Activated T-helper 1 cell treated with anti-CD3 and anti-CD28 coated beads, Interleukin-12 subunit alpha, Interleukin-12 subunit beta, Interleukin-2, Interleukin-4 antibody, amounts not matched to agents 30 ng/mL and 10 ng/mL and 1 ng/mL, durations not matched to agents 14 hours and 24 hours and 36 hours (primary cell): ENCODE measurements at regions of chr14 and their contacts with region 1.

Region 1: DNA sequence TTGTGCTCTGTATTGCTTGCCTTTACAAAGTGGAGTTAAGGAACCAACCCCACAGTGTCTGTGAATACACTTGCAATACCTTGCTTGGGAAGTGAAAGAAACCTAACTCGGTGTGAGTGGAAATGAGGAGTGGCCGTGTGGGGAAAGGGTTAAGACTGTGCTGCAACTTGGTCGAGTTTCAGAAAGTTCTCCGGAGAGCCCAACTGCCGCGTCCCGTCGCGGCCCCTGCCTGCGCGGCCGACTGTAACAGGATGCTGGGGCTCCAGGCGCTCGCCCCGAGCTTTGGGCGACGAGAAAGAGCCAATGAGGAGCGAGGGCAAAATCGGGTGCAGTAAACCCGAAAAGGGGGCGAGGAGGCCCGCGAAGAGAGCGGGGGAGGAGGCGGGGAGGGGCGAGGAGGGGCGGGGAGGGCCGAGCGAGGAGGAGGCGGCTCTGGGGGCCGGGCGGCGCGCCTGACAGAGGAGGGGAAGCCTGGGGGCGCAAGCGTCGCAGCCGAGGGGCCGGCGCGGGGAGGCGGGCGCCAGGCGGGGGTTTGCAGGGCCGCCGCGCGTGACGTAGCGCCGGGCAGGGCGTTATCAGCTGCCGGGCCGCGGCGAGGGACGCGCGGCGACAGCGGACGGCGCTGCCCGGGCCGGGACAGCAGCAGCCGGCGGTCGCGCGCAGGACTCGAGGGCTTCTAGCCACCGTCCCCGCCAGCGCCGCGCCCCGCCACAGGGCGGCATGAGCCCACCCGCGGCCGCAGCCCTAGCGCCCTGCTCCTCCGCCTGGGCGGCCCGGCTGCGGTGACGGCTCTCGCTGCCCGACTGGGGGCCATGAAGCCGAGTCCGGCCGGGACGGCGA is at the start of gene DACT1:
- DNase-seq: peak; percentile 49
- H3K4me3 Mint-ChIP-seq: peak within 1 kb of the TSS; percentile 86
- H3K27ac Mint-ChIP-seq: peak within 1 kb of the TSS; percentile 75
- H3K4me1 Mint-ChIP-seq: peaks cover 35% of the 10 kb centered on the region
- H3K27me3 Mint-ChIP-seq: peaks cover 37% of the 10 kb centered on the region
- total RNA-seq, gene DACT1: 1.6 and 2.3 TPM in 2 replicates

Region 2: DNA sequence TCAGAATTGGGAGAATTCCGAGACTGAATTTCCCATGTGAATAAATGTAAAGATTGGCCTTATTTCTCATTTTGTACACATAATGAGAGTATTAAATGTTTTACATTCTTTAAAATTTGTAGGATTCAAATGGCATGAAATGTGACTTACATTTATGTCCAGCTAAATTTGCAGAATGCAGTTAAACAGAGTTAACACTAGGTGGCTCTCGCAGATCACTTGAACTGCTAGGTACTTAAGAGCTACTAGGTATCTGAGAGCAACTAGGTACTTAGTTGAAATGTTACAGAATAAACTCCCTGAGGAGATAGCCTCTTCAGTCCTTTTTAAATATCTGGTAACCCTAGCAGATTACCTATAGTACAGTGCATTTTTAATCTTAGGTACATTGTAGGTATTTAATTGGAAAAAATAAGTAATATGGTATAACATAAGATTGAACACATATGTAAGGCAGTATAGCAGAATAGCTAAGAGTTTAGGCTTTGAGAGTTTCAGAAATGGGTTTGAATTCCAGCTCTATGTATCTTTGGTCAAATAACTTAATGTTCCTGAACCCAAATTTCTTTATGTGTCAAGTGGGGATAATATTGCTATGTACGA is 136.3 kb before region 1 on chr14:
- intact Hi-C with region 1: loop called (anchors 1 kb)
- DNase-seq: peak; percentile 13
- H3K4me3 Mint-ChIP-seq: no peak overlapping the region
- H3K27ac Mint-ChIP-seq: no peak overlapping the region
- H3K4me1 Mint-ChIP-seq: no peaks in the 10 kb centered on the region
- H3K27me3 Mint-ChIP-seq: no peaks in the 10 kb centered on the region

Region 3: DNA sequence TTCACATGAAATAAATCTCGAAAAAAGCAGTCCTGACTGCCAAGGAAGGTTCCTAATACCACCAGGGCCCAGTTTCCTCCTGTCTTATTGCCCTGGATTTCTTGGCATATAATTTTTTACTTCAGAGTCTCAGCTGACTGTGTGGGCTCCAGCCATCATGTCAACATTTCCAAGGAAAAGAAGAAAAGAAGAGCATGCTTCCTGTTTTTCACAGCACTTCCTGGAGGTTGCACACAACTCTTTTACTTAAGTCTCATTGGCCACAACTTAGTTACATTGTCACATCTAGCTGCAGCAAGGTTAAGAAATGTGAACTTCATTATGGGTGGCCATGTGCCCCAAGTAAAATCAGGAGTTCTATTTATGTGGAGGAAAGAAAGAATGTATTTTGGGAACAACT is 24.4 kb after region 1 on chr14:
- intact Hi-C with region 1: loop called (anchors 1 kb)
- DNase-seq: no peak
- H3K4me3 Mint-ChIP-seq: no peak overlapping the region
- H3K27ac Mint-ChIP-seq: peak overlapping the region; percentile 40
- H3K4me1 Mint-ChIP-seq: peaks cover 16% of the 10 kb centered on the region
- H3K27me3 Mint-ChIP-seq: no peaks in the 10 kb centered on the region

Region 4: DNA sequence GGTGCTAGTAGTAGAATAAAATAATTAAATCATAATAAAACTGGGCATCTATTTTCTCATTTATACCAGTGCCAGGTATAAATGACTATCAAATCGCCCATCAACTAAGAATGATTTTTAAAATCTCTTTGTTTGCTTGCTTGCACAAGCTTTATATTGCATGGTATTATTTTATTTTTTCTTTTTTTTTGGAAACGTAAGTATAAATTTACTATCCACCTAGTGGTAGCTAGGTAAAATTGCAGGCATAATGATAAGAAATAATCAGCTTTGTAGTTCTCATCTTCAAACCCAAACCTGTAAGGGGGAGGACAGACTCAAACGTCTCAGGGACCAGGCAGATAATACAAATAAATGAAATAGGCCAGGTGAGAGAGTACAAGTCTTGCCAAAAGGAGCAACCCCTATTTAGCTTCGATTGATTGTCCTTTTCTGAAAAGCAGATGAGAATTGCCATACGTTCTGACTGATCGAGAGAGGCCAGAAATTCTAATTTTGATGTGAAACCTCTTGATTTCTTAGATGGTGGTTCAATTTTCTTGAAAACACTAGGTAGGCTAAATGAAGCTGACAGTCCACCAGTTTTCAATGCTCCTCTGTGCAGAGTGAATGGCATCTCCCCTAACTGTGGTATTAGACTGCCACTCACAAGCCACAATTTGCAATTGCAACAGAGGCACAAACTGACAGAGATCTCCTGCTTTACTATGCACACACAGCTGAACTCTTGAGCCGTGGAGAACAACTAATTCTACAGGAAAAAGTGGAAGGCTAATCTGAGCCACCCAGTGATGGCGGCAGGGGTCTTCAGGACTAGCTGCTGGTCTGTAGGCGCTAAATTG is 189.5 kb after region 1 on chr14:
- intact Hi-C with region 1: loop called (anchors 5 kb)
- DNase-seq: no peak
- H3K4me3 Mint-ChIP-seq: no peak overlapping the region
- H3K27ac Mint-ChIP-seq: no peak overlapping the region
- H3K4me1 Mint-ChIP-seq: peaks cover 6% of the 10 kb centered on the region
- H3K27me3 Mint-ChIP-seq: peaks cover 5% of the 10 kb centered on the region

Region 5: GRCh38 chr14:59055439-59056045 is 417.9 kb after region 1 on chr14:
- intact Hi-C with region 1: loop called (anchors 1 kb)
- DNase-seq: no peak
- H3K4me3 Mint-ChIP-seq: no peak overlapping the region
- H3K27ac Mint-ChIP-seq: no peak overlapping the region
- H3K4me1 Mint-ChIP-seq: no peaks in the 10 kb centered on the region
- H3K27me3 Mint-ChIP-seq: no peaks in the 10 kb centered on the region